ENCODE measurements at regions of chr11 and their contacts with region 1.

Region 1: GRCh38 chr11:36258730-36259360 is 30.4 kb downstream of the COMMD9 start:
- DNase-seq: peak in 9 of 10 donors; percentile 41 to 75 (median 65)
- H3K4me3 ChIP-seq: peak overlapping the region in 1 of 59 donors; percentile 11
- H3K27ac ChIP-seq: peak overlapping the region in 1 of 59 donors; percentile 18
- H3K27me3 ChIP-seq: no peaks in the 10 kb centered on the region
- CTCF ChIP-seq: peak in 55 of 56 donors; percentile 36 to 82 (median 69)

Region 2: DNA sequence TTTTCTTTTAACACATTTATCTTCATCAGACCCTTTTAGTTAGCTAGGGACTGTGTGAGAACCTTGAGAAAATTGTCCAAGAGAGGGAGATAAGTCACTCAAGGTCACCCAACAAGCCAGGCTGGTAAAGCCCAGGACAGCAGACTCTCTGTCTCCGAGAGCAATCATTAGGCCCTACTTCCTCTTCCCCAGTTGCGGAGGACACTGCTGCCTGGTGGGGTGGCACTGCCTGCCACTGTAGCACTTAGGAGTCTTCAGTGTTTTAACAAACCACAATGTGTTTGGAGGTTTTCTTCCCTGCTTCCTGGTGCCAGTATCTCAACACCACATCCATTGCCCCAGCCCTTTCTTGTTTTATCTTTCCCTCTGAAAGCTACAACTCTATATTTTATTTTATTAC is 447.1 kb before region 1 on chr11:
- intact Hi-C with region 1: loop called in 1 of 2 experiments (anchors 1 kb)
- DNase-seq: no peak
- H3K4me3 ChIP-seq: no peak overlapping the region
- H3K27ac ChIP-seq: peak overlapping the region in 11 of 59 donors; percentile 2 to 51 (median 24)
- H3K27me3 ChIP-seq: no peaks in the 10 kb centered on the region
- CTCF ChIP-seq: peak in 9 of 56 donors; percentile 5 to 33 (median 13)

Region 3: DNA sequence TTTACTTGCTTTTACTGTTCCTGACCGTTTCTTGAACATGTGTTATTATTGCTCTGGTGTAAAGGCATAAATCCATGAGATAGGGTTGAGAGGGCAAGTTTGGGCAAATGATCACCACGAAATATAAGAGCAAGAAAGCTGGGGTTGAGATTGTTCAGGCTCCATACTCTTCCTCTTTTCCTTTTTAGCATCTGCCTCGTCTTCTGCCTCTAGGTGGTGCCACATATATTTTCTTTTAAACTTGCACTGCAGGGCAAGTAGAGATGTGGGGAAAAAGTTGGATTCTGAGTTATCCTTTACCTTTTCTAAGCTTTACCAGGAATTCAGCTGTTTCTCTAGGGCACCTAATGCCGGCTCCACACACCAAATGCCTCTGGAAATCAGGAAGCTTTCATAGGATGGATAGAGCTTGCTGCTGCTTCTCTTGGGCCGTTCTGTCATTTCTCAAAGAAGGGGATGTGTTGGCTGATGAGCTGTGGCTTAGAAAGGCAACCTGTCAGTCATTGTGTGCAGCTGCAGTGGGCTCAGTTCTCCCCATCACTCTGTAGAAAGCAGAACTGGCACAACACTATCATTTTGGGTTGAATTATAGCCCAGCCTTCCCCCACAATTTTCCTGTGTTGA is 216.7 kb before region 1 on chr11:
- intact Hi-C with region 1: loop called (anchors 5 kb)
- DNase-seq: no peak
- H3K4me3 ChIP-seq: no peak overlapping the region
- H3K27ac ChIP-seq: peak overlapping the region in 1 of 59 donors; percentile 4
- H3K27me3 ChIP-seq: no peaks in the 10 kb centered on the region
- CTCF ChIP-seq: peak in 55 of 56 donors; percentile 29 to 76 (median 63)

Region 4: GRCh38 chr11:36131721-36132397 is 127.0 kb before region 1 on chr11:
- intact Hi-C with region 1: loop called in 1 of 2 experiments (anchors 5 kb)
- DNase-seq: peak in 9 of 10 donors; percentile 51 to 78 (median 65)
- H3K4me3 ChIP-seq: no peak overlapping the region
- H3K27ac ChIP-seq: peak overlapping the region in 9 of 59 donors; percentile 2 to 30 (median 19)
- H3K27me3 ChIP-seq: no peaks in the 10 kb centered on the region
- CTCF ChIP-seq: peak; percentile 44 to 89 (median 75)

Region 5: GRCh38 chr11:36149538-36150242 is 109.2 kb before region 1 on chr11:
- intact Hi-C with region 1: loop called in 1 of 2 experiments (anchors 10 kb)
- DNase-seq: peak in 4 of 10 donors; percentile 29 to 61 (median 44)
- H3K4me3 ChIP-seq: no peak overlapping the region
- H3K27ac ChIP-seq: peak overlapping the region in 32 of 59 donors; percentile 8 to 79 (median 53)
- H3K27me3 ChIP-seq: no peaks in the 10 kb centered on the region
- CTCF ChIP-seq: peak in 49 of 56 donors; percentile 23 to 60 (median 42)

Region 6: DNA sequence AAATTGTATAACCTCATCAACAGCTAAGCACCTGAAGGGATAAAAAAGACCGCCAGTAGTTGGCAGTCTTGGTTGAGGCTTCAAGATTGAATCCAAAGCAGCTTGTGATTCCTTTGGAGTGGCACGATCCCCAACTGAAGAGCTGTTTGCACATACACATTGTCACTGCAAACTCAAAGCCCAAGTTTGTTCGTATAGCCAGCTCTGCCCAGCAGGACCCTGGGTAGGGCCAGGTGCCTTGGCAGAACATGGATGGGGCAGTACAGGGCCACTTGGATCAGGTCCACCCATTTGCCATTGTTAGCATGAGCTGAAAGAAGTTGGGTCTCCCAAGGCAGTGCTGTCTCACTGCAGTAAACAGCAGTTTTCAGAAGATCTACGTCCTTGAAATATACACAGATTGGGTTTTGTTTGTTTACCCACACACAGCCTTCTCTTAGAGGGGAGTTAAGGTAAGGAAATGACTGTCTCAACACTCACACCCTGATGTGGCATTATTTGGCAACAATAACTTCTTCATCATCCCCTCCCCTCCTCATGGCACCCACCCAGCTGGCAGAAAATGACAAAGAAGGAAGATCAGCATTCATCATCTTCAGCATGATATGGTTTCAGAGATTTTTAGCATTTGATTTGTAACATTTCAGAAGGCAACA is 102.6 kb before region 1 on chr11:
- intact Hi-C with region 1: loop called (anchors 5 to 10 kb)
- DNase-seq: peak in 6 of 10 donors; percentile 22 to 79 (median 52)
- H3K4me3 ChIP-seq: peak overlapping the region in 20 of 59 donors; percentile 1 to 46 (median 20)
- H3K27ac ChIP-seq: peak overlapping the region in 56 of 59 donors; percentile 23 to 86 (median 67)
- H3K27me3 ChIP-seq: no peaks in the 10 kb centered on the region
- CTCF ChIP-seq: peak in 26 of 56 donors; percentile 7 to 48 (median 23)

Region 7: DNA sequence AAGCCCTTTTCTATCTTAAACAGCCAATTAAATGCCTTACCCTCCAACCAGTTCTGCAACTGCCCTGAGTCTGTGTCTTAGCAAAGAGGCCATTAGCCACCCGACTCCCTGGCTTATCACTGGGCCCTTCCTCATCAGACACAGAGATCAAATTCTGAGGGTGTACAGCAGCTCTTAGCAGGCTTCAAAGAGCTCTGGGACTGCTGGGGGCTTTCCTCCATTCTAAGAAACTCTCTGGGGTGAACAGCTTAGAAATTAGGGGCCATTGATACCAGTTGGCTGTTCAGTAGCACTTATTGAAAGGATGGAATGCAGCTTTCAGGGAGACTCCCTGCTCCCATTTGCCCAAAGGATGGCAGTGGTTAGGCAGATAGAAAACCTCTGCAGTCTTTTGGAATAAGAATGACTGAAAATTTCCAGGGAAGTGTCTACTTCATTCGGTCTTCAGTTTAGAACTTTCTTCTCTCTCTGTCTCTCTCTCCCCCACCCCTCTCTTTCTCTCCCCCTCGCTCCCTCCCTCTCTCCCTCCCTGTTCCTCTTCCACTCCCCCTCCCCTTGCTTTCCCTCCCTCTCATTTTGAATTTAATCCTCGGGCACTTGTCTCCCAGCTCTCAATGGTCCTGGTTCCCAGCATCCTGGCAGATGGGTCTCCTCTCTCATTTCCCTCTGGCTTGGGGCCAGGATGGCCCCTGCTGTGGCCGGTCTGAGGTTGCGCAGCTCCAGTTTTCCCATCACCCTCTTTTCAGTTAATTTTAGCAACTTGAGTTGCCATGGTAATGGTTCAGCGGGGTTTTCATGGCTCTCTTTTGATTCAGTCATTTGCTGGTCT is 46.1 kb before region 1 on chr11:
- intact Hi-C with region 1: loop called in 1 of 2 experiments (anchors 1 kb)
- DNase-seq: peak in 4 of 10 donors; percentile 23 to 84 (median 44)
- H3K4me3 ChIP-seq: no peak overlapping the region
- H3K27ac ChIP-seq: peak overlapping the region in 56 of 59 donors; percentile 34 to 93 (median 84)
- H3K27me3 ChIP-seq: no peaks in the 10 kb centered on the region
- CTCF ChIP-seq: no peak

Measured in dorsolateral prefrontal cortex (tissue), 120 donors.